ENCODE measurements at regions of chr7 and their contacts with region 1.

Region 1: GRCh38 chr7:70193514-70193913 is 595.2 kb downstream of the AUTS2 start:
- DNase-seq: peak; percentile 67
- H3K4me3 ChIP-seq: no peak overlapping the region
- H3K27ac ChIP-seq: peak overlapping the region in 1 of 2 experiments; percentile 47; a peak in 1 of 4 replicates
- H3K4me1 ChIP-seq: peaks cover 0 to 5% of the 10 kb centered on the region in 2 experiments; a peak in 2 of 4 replicates
- H3K27me3 ChIP-seq: no peaks in the 10 kb centered on the region
- CTCF ChIP-seq: peak; percentile 69
- EP300 ChIP-seq: 0 out of 4 replicates have a peak, but pooled peaks of 1 of the 2 experiments have one; percentile 25
- RAD21 ChIP-seq: peak; percentile 87

Region 2: DNA sequence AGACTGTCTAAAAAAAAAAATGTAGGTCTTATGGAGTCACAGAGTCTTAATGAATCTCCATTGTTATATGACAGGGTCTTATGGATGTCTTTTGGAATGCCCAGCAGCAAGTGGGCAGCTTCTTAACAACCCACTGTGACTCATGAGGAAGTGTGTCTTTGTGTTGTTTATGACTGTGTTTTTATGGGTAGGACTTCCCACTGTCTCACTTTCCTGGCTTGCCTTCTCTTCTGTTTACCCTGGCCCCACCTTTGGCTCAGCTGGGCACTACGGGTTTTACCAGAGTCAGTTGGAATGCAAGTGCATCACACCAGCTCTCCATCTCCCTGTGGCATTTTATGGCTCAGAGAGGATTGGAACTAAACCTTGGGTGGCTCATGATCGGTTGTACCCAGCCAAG is 14.7 kb before region 1 on chr7:
- CTCF ChIA-PET with region 1: interaction called, 17 read pairs
- POLR2A ChIA-PET with region 1: no interaction called
- DNase-seq: no peak
- H3K4me3 ChIP-seq: no peak overlapping the region
- H3K27ac ChIP-seq: no peak overlapping the region
- H3K4me1 ChIP-seq: peaks cover 2 to 23% of the 10 kb centered on the region in 2 experiments; a peak in 3 of 4 replicates
- H3K27me3 ChIP-seq: no peaks in the 10 kb centered on the region
- CTCF ChIP-seq: no peak
- EP300 ChIP-seq: peak in 1 of 2 experiments; percentile 53; a peak in 1 of 4 replicates
- RAD21 ChIP-seq: no peak

Region 3: DNA sequence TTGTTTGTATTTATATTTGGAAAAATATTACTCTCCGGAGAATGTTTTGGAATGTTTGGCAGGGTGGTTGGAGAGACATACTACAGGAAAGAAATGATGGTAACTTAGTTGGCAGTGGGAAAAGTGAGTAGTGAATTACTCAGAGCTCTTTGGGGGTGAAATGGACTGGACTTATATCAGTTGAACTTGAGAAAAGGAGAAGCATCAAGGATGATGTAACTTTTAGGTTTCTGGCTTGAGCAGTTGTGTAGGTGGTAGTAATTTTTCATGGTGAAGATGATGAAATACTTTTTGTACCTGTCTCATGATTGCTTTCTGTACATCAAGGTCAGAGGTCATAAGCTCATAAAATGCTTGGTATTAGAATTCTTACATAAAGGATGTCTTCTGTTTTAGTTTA is 22.0 kb after region 1 on chr7:
- CTCF ChIA-PET with region 1: interaction called, 19 read pairs
- POLR2A ChIA-PET with region 1: no interaction called
- DNase-seq: no peak
- H3K4me3 ChIP-seq: no peak overlapping the region
- H3K27ac ChIP-seq: peak overlapping the region in 1 of 2 experiments; percentile 41; a peak in 1 of 4 replicates
- H3K4me1 ChIP-seq: peaks cover 12 to 13% of the 10 kb centered on the region in 2 experiments
- H3K27me3 ChIP-seq: no peaks in the 10 kb centered on the region
- CTCF ChIP-seq: no peak
- EP300 ChIP-seq: peak in 1 of 2 experiments; percentile 69; a peak in 2 of 4 replicates
- RAD21 ChIP-seq: no peak